ENCODE measurements at regions of chr2 and their contacts with region 1.

Region 1: GRCh38 chr2:68252407-68253218 is at the start of gene PPP3R1:
- DNase-seq: peak; percentile 96
- H3K4me3 ChIP-seq: peak within 1 kb of the TSS; percentile 89 to 91
- H3K27ac ChIP-seq: peak within 1 kb of the TSS; percentile 96 to 97
- H3K4me1 ChIP-seq: peaks cover 6% of the 10 kb centered on the region
- H3K27me3 ChIP-seq: no peaks in the 10 kb centered on the region
- CTCF ChIP-seq: peak in 1 of 4 experiments; percentile 6
- POLR2A ChIP-seq: peak; percentile 91
- total RNA-seq, gene PPP3R1: 31.3 to 34.9 TPM

Region 2: GRCh38 chr2:67159929-67160328 is 1092.7 kb before region 1 on chr2:
- intact Hi-C with region 1: no loop called
- DNase-seq: no peak
- H3K4me3 ChIP-seq: no peak overlapping the region
- H3K27ac ChIP-seq: peak overlapping the region; percentile 16 to 34
- H3K4me1 ChIP-seq: no peaks in the 10 kb centered on the region
- H3K27me3 ChIP-seq: no peaks in the 10 kb centered on the region
- CTCF ChIP-seq: no peak
- POLR2A ChIP-seq: no peak

Region 3: DNA sequence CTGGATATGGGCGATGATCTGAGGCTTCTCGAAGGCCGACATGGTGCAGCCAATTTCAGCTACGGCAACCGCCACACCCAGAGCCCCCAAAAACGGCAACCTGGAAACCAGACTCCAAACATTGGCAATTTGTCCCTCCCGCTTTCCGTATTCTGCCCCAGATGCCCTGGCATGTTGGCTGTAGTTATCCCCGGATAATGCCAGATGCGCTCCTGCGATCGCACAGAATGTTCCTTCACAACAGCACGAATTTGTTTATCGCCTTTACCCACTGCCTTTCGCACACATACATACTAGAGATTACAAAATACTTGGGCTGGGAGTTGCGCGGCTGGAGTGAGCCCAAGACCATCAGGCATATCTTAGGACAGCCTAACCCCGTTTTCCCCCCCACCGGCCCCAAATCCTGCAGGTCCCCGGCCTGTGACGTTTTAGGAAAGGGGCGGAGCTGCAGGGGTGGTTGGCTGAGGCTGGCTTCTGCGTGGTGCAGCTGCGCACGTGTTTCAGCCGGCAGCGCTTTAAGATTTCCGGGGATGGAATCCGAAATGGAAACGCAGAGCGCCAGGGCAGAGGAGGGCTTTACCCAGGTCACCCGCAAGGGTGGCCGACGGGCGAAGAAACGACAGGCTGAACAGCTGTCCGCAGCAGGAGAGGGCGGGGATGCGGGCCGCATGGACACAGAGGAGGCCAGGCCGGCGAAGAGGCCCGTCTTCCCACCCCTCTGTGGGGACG is 95.0 kb before region 1 on chr2 and contains the start of gene PNO1:
- intact Hi-C with region 1: loop called (anchors 2 kb)
- DNase-seq: peak; percentile 94
- H3K4me3 ChIP-seq: peak within 1 kb of the TSS; percentile 65 to 67
- H3K27ac ChIP-seq: peak within 1 kb of the TSS; percentile 88 to 92
- H3K4me1 ChIP-seq: peaks cover 6% of the 10 kb centered on the region
- H3K27me3 ChIP-seq: no peaks in the 10 kb centered on the region
- CTCF ChIP-seq: peak in 1 of 4 experiments; percentile 20
- POLR2A ChIP-seq: no peak
- total RNA-seq, gene PNO1: 10.1 to 20.2 TPM